Thyroid gland (tissue), 4 donors: ENCODE measurements at regions of chr2 and their contacts with region 1.

Region 1: DNA sequence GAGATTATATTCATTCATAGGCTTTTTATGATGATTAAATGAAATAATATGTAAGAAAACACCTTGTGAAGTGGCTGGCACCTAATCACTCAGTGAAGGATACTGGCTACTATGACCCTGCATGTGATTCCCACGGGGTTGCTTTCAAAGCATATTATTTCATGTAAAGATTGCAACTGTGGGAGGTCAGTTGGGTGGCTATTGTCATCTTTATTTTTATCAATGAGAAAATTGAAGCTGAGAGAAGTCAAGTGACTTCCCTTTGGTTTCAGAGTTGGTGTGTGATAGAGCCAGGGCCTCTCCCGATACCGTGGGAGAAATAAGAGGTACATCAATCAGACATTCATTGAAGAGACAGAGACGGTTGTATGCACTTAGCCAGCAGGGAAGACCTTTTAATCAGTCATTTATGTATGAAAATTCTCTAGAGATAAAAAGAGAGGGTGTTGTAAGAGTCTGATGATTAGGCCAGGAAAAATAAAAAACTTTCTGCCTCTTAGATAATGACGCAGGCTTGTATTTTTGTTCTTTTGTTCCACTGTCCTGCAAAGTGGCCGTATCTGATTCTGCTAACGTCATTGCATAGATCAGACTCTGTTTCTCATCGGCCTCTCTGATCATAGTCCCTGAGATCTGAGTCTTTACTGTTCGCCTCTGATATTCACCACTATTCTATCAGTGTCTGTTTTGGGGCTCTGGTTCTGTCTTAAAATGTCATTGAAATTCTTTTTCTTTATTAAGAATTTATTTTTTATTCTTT is 50.5 kb downstream of the QPCT start:
- DNase-seq: no peak
- H3K4me3 ChIP-seq: no peak overlapping the region
- H3K27ac ChIP-seq: no peak overlapping the region
- H3K4me1 ChIP-seq: peaks cover 0 to 7% of the 10 kb centered on the region in 2 donors
- H3K27me3 ChIP-seq: no peaks in the 10 kb centered on the region
- CTCF ChIP-seq: no peak
- POLR2A ChIP-seq: no peak

Region 2: DNA sequence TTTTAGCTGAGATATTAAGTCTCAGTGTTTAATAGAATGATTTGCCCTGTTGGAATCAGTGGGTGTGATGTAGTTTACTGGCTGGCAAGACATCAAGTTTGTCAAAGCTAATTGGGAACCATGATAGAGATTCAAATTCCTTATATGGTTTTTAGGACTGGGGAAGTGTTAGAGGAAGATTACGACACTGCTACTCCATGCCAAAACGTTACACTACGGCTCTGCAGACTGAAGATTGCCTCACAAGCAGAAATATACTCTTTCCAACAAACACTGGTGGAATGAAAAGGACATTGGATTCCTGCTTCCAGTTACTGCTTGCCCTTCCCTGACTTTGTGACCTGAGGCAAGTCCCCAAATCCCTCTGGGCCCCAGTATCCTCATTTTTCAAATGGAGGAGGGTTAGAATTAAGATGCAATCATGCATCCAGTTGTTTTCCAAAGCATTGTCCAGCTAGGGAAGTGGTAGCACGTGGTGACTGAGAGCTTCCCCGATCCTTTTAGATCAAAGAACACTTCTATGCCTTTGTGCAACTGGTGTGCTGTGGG is 128.9 kb after region 1 on chr2:
- intact Hi-C with region 1: no loop called
- DNase-seq: no peak
- H3K4me3 ChIP-seq: no peak overlapping the region
- H3K27ac ChIP-seq: no peak overlapping the region
- H3K4me1 ChIP-seq: peaks cover 0 to 7% of the 10 kb centered on the region in 2 donors
- H3K27me3 ChIP-seq: no peaks in the 10 kb centered on the region
- CTCF ChIP-seq: no peak
- POLR2A ChIP-seq: no peak

Region 3: GRCh38 chr2:37555457-37555856 is 160.5 kb after region 1 on chr2:
- intact Hi-C with region 1: no loop called
- DNase-seq: peak; percentile 16 to 25
- H3K4me3 ChIP-seq: no peak overlapping the region
- H3K27ac ChIP-seq: no peak overlapping the region
- H3K4me1 ChIP-seq: no peaks in the 10 kb centered on the region
- H3K27me3 ChIP-seq: no peaks in the 10 kb centered on the region
- CTCF ChIP-seq: no peak
- POLR2A ChIP-seq: no peak

Region 4: DNA sequence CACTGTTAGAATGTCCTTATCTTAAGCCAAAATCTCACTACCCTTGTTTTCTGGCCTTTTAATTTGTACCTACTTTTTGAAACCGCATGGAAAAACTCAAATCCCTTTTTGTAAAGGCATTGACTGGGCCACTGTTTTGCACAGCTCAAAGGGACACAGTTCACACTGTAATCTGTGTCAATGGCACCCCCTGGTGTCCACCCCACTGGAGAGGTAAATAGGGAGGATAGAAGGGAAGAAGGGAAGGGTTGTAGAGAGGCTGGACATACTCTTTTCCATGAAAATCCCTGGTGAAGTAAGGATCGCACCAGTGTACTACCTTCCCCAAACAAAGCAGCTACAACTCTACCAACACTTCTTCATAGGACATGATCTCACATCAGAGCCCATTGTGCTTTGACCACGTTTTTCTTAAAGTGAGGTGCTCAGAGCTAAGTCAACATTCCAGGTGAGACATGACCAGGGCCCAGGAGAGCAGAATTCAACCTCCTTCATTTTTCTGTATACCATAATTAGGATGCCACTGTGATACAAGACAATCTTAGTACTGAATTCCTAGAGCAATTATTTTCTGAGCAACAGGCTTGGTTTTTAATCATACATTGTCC is 437.7 kb after region 1 on chr2:
- intact Hi-C with region 1: loop called (anchors 5 kb)
- DNase-seq: peak; percentile 88 to 92
- H3K4me3 ChIP-seq: no peak overlapping the region
- H3K27ac ChIP-seq: no peak overlapping the region
- H3K4me1 ChIP-seq: peaks cover 0 to 14% of the 10 kb centered on the region in 2 donors
- H3K27me3 ChIP-seq: no peaks in the 10 kb centered on the region
- CTCF ChIP-seq: peak; percentile 40 to 90 (median 76)
- POLR2A ChIP-seq: no peak

Region 5: GRCh38 chr2:37877457-37878315 is 482.7 kb after region 1 on chr2:
- intact Hi-C with region 1: loop called (anchors 5 kb)
- DNase-seq: no peak
- H3K4me3 ChIP-seq: no peak overlapping the region
- H3K27ac ChIP-seq: no peak overlapping the region
- H3K4me1 ChIP-seq: no peaks in the 10 kb centered on the region
- H3K27me3 ChIP-seq: no peaks in the 10 kb centered on the region
- CTCF ChIP-seq: peak; percentile 49 to 78 (median 67)
- POLR2A ChIP-seq: no peak